Transverse colon (tissue), 4 donors: ENCODE measurements at regions of chr6 and their contacts with region 1.

Region 1: DNA sequence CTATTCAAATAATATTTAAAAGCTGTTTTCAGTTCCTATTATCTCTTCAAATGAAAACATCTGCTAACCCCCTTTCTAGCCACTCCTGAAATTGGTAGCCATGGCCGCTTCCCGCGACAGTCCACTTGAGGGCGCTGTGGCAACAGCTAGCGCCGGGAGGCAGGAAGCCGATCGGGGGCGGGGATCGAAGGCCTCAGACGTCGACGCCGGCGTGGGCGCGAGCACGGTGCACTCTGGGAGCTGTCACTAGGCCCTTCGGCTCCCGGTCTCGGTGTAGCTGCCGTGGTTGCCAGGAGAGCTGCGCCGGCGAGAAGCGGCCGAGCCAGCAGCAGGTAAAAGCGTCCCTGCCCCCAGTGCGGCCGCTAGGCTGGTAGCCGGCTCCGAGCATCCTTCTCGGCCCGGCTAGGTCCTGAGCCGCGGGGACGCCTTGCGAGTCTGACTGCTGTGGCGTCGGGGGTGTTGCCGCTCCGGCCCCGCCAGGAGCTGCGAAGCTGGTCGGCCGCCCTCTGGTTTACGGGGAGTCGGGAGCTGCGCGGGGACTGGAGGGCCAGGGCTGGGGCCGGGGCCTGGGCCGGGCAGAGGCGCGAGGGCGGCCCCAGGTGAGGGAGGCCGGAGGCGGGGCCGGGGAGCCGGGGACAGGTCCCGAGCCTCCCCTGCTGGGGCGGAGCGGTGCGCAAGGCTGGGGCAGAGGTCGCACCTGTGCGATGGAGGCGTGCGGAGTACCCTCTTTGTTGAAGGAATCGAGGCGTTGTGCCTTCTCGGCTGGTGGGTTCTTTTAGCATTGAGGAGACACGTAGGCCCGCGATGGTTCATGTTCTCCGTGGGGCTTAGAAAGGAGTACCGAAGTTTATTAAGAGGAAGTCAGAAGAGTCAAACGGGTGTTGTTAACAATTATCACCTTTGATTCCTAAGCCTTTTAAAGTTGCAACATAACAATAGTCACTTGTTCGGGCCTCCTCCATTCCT is at the start of gene DOP1A:
- DNase-seq: peak; percentile 97
- H3K4me3 ChIP-seq: peak within 1 kb of the TSS; percentile 59 to 83 (median 74)
- H3K27ac ChIP-seq: peak within 1 kb of the TSS; percentile 89 to 98 (median 92)
- H3K4me1 ChIP-seq: peaks cover 8 to 54% (median 33%) of the 10 kb centered on the region in 4 donors
- H3K27me3 ChIP-seq: no peaks in the 10 kb centered on the region
- CTCF ChIP-seq: peak; percentile 92 to 97 (median 96)
- EP300 ChIP-seq: no peak
- POLR2A ChIP-seq: peak; percentile 71
- total RNA-seq, gene DOP1A: 25.8 to 52.9 (median 40.6) TPM

Region 2: DNA sequence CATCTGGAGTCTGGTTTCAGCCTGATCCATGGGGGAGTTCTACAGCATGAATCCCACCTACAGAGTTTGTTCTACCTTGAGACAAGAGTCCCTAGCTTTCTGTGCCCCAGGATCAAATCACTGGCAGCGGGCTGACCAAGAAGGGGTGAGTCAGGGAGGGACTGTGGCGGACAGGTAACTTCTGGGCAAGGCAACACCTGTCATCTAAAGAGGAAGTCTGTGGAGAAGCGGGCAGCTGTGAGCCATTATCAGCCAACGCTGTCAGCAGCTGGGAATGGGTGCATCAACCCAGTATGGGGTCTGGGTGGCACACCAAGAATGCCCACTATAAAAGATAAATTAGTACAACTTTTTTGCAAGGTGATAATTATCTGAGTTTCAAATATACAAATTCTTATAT is 48.0 kb before region 1 on chr6:
- in situ Hi-C with region 1: no loop called
- intact Hi-C with region 1: no loop called
- DNase-seq: no peak
- H3K4me3 ChIP-seq: no peak overlapping the region
- H3K27ac ChIP-seq: no peak overlapping the region
- H3K4me1 ChIP-seq: no peaks in the 10 kb centered on the region
- H3K27me3 ChIP-seq: no peaks in the 10 kb centered on the region
- CTCF ChIP-seq: no peak
- EP300 ChIP-seq: no peak
- POLR2A ChIP-seq: no peak

Region 3: GRCh38 chr6:83192871-83193746 is 125.4 kb after region 1 on chr6 and contains the starts of genes PGM3 and RWDD2A:
- in situ Hi-C with region 1: no loop called
- intact Hi-C with region 1: loop called (anchors 10 kb)
- DNase-seq: peak; percentile 94
- H3K4me3 ChIP-seq: peak within 1 kb of the TSS; percentile 79 to 97 (median 90)
- H3K27ac ChIP-seq: peak within 1 kb of the TSS; percentile 85 to 87 (median 86)
- H3K4me1 ChIP-seq: peaks cover 5 to 28% (median 12%) of the 10 kb centered on the region in 4 donors
- H3K27me3 ChIP-seq: no peaks in the 10 kb centered on the region
- CTCF ChIP-seq: no peak
- EP300 ChIP-seq: no peak
- POLR2A ChIP-seq: peak; percentile 88
- total RNA-seq, gene PGM3: 7.9 to 291 (median 21.1) TPM
- total RNA-seq, gene RWDD2A: 0.20 to 3.5 (median 1.7) TPM

Region 4: GRCh38 chr6:83199863-83200225 is 132.1 kb after region 1 on chr6:
- in situ Hi-C with region 1: loop called in 1 of 4 experiments (anchors 10 kb)
- intact Hi-C with region 1: loop called (anchors 10 kb)
- DNase-seq: no peak
- H3K4me3 ChIP-seq: no peak overlapping the region
- H3K27ac ChIP-seq: no peak overlapping the region
- H3K4me1 ChIP-seq: peaks cover 0 to 2% (median under 1%) of the 10 kb centered on the region in 4 donors
- H3K27me3 ChIP-seq: no peaks in the 10 kb centered on the region
- CTCF ChIP-seq: no peak
- EP300 ChIP-seq: no peak
- POLR2A ChIP-seq: no peak

Region 5: DNA sequence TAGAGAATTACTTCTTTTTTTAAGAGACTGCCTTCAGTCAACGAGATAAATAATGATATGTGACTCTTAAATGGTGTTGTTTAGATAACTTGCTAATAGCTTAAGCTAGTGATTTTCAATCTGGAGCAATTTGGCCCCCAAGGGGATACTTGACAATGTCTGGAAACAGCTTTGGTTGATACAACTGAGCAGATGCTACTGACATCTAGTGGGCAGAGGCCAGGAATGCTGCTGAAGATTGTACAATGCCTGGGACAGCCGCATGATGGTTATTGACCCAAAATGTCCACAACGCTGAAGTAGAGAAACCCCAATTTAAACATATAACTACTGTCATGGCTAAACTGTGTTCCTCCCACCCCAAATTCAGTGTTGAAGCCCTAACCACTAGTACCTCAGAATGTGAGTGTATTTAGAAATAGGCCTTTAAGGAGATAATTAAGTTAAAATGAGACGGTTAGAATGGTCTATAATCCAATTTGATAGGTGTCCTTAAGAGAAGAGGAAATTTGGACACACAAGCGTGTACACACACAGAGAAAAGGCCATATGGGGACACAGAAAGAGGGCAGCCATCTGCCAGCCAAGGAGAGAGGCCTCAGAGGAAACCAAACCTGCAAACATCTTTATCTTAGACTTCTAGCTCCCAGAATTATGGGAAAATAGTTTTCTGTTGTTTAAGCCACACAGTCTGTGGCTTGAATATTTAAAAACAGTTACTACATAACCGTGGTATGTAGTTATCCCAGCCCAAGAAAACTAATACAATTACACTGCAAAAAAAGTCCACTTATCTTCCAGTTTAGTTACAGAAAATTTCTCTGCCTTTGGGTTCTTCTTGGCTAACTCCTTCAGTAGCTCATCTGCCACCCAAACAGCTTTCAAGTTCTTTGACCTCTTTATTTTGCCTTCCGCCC is 147.7 kb after region 1 on chr6:
- in situ Hi-C with region 1: loop called in 1 of 4 experiments (anchors 10 kb)
- intact Hi-C with region 1: no loop called
- DNase-seq: peak; percentile 51
- H3K4me3 ChIP-seq: no peak overlapping the region
- H3K27ac ChIP-seq: no peak overlapping the region
- H3K4me1 ChIP-seq: no peaks in the 10 kb centered on the region
- H3K27me3 ChIP-seq: no peaks in the 10 kb centered on the region
- CTCF ChIP-seq: peak; percentile 66 to 76 (median 68)
- EP300 ChIP-seq: no peak
- POLR2A ChIP-seq: no peak